PC-3 (cell line): ENCODE measurements at regions of chr20 and their contacts with region 1.

Region 1: DNA sequence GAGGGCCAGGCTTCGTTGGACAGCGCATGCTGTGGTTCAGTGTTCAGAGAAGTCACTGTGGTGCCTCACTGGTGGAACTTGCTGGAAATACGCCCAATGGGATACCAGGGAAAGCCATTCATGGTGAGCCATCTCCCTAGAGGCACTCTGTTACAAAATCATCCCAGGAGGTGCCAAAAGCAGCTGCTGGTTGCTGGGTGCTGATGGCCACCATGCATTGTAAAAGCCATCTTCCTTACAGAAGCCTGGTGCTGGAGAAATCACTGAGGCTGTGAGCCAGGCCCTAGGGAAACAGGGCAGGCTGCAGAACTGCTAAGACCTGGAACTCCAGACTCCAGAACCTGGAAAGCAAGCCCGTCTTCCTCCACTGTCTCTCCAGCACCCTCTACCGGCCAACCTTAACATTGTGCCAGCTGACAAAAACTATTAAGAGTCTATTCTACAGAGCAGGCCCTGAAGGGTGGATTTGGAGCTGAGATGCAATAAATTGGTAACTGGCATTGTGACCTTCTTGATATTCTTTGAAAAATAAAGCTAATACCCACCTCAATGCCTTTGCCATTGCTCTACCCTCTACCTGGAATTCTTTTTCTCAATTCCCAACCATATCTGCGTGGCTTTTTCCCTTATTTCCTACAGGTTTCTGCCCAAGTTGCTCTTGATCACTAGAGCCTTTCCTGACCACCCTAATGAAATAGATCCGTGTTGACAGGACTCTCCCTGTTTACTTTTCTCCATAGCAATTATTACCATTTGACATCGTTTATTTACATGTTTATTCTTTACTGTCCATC is 18.5 kb downstream of the SNRPB start:
- DNase-seq: peak; percentile 83
- ATAC-seq: peak; percentile 76
- H3K4me3 ChIP-seq: no peak overlapping the region
- H3K27ac ChIP-seq: no peak overlapping the region
- H3K4me1 ChIP-seq: no peaks in the 10 kb centered on the region
- H3K27me3 ChIP-seq: no peaks in the 10 kb centered on the region
- CTCF ChIP-seq: peak; percentile 91

Region 2: DNA sequence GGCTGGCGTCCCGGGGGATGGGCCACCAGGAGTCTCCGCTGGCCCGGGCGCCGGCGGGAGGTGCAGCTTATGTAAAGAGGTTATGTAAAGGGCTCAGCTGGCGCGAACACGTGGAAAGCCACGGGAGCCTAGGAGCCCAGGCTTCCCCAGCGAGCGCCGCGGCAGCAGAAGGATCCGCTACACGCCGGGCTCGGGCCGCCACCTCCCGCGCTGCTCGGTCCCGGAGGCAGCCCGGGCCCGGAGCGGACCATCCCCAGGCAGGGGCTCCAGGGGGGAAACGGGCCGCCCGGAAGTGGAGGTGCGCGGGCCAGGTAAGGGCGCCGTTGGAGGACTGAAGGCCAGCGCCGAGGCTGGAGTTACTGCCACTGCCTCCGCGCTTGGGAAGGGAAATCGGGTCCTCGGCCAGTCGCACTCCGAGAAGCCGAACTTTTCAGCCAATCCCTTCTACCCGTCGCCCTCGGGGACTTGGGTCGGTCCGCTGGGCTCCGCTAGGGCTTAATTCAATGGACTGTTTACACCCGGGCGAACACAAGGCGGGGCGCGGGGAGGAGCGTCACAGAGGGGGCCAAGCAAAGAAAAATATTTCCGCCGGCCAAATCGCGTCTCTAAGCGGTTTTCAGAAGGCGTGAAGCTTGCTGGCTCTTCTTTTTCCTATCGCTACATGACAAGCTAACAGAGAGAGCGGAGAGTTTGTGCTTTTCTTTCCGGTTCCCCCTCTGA is 350.1 kb before region 1 on chr20:
- CTCF ChIA-PET with region 1: no interaction called
- POLR2A ChIA-PET with region 1: no interaction called
- intact Hi-C with region 1: loop called (anchors 10 kb)
- DNase-seq: peak; percentile 90
- ATAC-seq: peak; percentile 79
- H3K4me3 ChIP-seq: peak overlapping the region; percentile 87
- H3K27ac ChIP-seq: peak overlapping the region; percentile 88
- H3K4me1 ChIP-seq: peaks cover 27% of the 10 kb centered on the region
- H3K27me3 ChIP-seq: no peaks in the 10 kb centered on the region
- CTCF ChIP-seq: no peak

Region 3: GRCh38 chr20:2349818-2350508 is 102.2 kb before region 1 on chr20:
- CTCF ChIA-PET with region 1: no interaction called
- POLR2A ChIA-PET with region 1: no interaction called
- intact Hi-C with region 1: loop called (anchors 1 kb)
- DNase-seq: peak; percentile 49
- ATAC-seq: no peak
- H3K4me3 ChIP-seq: no peak overlapping the region
- H3K27ac ChIP-seq: no peak overlapping the region
- H3K4me1 ChIP-seq: no peaks in the 10 kb centered on the region
- H3K27me3 ChIP-seq: peaks cover 20% of the 10 kb centered on the region; the same call in 1 of the 2 replicates
- CTCF ChIP-seq: no peak

Region 4: DNA sequence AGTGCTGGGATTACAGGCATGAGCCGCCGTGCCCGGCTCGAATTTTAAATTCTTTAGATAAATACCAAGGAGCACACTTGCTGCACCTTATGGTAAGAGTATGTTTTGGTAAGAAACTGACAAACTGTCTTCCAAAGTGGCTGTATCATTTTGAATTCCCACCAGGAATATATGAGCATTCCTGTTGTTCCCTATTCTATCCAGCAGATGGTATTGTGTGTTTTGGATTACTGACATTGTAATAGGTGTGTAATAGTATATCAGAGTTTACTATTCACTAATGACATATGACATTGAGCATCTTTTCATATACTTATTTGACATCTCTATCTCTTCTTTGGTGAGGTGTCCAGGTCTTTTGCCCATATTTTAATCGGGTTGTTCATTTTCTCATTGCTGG is 30.9 kb before region 1 on chr20:
- CTCF ChIA-PET with region 1: no interaction called
- POLR2A ChIA-PET with region 1: no interaction called
- intact Hi-C with region 1: loop called (anchors 2 kb)
- DNase-seq: peak; percentile 51
- ATAC-seq: peak; percentile 64; the same call in 1 of the 2 replicates
- H3K4me3 ChIP-seq: no peak overlapping the region
- H3K27ac ChIP-seq: no peak overlapping the region
- H3K4me1 ChIP-seq: no peaks in the 10 kb centered on the region
- H3K27me3 ChIP-seq: peaks cover 57% of the 10 kb centered on the region
- CTCF ChIP-seq: peak; percentile 62

Region 5: DNA sequence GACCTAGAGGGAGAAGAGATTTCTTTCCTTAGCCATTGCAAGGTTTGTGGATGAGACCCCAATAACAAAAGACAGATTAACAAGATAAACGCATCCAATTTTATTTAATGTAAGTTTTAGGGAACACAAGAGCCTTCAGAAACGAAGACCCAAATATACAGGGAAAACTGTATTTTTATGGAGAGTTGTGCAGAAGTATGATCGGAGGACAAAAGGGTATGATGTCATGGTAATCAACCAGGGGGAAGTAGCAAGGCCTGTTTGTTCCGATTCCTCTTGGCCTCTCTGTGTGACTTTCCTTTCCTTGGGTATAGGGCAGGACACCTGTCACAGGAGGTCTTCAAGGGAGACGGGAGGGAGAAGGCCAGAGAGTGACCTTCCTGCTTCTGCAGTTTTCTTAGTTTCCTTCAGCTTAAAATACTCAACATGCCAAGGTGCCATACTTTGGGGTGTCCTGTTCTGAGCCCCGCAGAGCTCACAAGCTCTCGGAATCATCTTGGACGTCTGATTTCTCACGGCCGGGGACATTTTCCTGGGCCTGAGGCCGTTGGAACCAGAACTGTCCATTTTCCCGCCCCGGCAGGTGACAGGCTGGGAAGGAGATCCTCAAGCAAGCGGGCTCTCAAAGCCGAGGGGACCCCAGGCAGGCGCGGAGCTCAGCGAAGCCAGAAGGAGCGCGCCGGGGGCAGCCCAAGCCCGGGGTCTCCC is 105.9 kb after region 1 on chr20:
- CTCF ChIA-PET with region 1: no interaction called
- POLR2A ChIA-PET with region 1: no interaction called
- intact Hi-C with region 1: no loop called
- DNase-seq: no peak
- ATAC-seq: no peak
- H3K4me3 ChIP-seq: no peak overlapping the region
- H3K27ac ChIP-seq: no peak overlapping the region
- H3K4me1 ChIP-seq: no peaks in the 10 kb centered on the region
- H3K27me3 ChIP-seq: peaks cover 80% of the 10 kb centered on the region
- CTCF ChIP-seq: no peak